ENCODE measurements at regions of chr16 and their contacts with region 1.

Region 1: DNA sequence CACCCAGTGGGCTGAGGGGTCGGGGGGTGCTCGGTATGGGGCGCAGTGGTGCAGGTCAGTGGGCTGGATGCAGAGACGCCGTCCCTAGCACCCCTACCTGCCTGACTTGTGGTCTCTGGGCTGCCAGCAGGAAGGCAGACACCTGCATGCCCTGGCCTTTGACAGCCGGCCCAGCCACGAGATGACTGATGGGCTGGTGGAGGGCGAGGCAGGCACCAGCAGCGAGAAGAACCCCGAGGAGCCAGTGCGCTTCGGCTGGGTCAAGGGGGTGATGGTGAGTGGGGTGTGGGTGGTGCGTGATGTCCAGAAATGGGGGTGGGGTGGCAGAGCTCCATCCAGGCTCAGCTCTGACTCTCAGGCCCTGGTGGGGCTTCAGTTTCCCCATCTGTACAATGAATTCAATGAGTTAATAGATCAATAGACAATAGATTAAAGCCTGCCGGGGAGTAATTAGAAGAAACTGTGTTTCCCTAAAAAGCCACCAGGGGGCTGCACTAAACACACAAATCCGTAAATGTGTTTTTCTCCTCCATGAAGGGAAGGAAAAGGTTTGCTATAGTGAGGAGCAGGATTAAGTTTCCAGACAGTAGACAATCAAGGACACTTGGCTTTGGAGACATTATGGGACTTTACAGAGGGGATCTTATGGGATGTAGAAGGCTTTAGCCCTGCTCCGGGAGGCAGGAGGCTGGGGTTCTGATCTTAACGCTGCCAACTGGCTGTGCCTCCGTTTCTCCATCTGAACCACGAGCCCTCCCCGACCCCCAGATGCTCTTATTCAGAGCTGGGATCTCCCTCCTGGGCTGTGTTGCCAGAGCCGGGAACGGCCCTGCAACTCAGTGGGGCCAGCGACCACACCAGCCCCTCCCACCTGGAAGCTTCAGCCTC is 2.2 kb downstream of the SLC12A3 start:
- DNase-seq: peak; percentile 63 to 66 (median 65)
- ATAC-seq: peak; percentile 77
- H3K4me3 ChIP-seq: no peak overlapping the region
- H3K27ac ChIP-seq: peak overlapping the region in 1 of 4 donors; percentile 2
- H3K4me1 ChIP-seq: peaks cover 23% of the 10 kb centered on the region
- H3K27me3 ChIP-seq: no peaks in the 10 kb centered on the region
- CTCF ChIP-seq: peak; percentile 66 to 93 (median 85)
- POLR2A ChIP-seq: no peak

Region 2: DNA sequence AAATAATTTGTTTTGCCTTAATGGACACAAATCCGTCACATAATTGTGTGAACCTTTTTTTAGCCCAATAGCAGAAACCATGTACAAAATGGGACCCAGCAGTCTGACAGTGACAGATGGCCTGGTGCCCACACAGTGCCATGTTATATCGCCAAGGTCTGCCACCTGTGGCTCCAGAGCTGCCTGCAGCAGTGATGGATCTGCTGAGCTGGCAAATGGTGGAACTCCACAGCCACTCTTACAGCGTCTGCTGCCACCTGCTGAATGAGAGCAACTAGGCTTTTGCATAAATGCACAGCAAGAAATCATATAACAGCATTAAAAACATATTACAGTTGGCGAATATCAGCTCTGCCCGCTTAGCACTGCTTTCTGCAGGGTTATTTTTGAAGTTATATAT is 77.8 kb before region 1 on chr16:
- intact Hi-C with region 1: no loop called
- DNase-seq: peak; percentile 47 to 88 (median 78)
- ATAC-seq: peak; percentile 70
- H3K4me3 ChIP-seq: no peak overlapping the region
- H3K27ac ChIP-seq: no peak overlapping the region
- H3K4me1 ChIP-seq: no peaks in the 10 kb centered on the region
- H3K27me3 ChIP-seq: no peaks in the 10 kb centered on the region
- CTCF ChIP-seq: peak in 5 of 7 experiments; percentile 44 to 90 (median 66)
- POLR2A ChIP-seq: no peak

Region 3: DNA sequence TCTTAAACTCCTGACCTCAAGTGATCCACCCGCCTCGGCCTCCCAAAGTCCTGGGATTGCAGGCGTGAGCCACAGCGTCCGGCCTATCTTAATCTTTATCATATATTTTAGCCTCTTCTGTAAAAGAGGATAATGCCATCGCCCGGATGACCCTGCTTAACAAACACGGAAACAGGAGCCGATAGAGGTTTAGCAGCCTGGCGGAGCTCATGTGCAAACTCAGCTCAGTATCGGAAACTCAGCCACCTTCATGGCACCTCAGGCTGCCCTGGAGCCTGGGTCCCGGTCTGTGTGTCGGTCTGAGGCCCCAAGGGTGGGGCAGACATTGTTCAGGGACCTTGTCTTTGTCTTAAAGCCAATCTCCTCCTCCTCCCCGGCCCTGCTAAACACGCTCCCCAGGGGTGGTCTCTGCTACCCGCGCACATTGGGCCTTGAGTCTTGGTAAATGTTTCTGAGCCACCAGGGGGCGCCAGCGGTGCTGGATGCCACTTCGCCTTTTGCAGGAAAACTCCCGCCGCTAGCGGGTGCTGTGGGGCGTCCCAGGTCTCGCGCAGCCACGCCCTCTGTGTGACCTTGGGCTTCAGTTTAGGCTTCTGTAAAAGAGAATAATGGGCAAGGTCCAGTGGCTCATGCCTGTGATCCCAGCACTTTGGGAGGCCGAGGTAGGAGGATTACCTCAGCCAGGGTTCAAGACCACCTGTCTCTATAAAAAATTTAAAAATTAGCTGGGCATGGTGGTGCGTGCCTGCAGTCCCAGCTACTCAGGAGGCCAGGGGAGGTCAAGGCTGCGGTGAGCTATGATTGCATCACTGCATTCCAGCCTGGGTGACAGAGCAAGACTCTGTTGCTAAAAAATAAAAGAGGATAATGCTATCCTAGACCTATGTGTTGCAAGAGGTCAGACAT is 97.3 kb after region 1 on chr16:
- intact Hi-C with region 1: loop called (anchors 5 kb)
- DNase-seq: peak; percentile 76 to 91 (median 90)
- ATAC-seq: peak; percentile 75
- H3K4me3 ChIP-seq: no peak overlapping the region
- H3K27ac ChIP-seq: no peak overlapping the region
- H3K4me1 ChIP-seq: peaks cover 8% of the 10 kb centered on the region
- H3K27me3 ChIP-seq: no peaks in the 10 kb centered on the region
- CTCF ChIP-seq: peak; percentile 58 to 95 (median 87)
- POLR2A ChIP-seq: no peak

Region 4: DNA sequence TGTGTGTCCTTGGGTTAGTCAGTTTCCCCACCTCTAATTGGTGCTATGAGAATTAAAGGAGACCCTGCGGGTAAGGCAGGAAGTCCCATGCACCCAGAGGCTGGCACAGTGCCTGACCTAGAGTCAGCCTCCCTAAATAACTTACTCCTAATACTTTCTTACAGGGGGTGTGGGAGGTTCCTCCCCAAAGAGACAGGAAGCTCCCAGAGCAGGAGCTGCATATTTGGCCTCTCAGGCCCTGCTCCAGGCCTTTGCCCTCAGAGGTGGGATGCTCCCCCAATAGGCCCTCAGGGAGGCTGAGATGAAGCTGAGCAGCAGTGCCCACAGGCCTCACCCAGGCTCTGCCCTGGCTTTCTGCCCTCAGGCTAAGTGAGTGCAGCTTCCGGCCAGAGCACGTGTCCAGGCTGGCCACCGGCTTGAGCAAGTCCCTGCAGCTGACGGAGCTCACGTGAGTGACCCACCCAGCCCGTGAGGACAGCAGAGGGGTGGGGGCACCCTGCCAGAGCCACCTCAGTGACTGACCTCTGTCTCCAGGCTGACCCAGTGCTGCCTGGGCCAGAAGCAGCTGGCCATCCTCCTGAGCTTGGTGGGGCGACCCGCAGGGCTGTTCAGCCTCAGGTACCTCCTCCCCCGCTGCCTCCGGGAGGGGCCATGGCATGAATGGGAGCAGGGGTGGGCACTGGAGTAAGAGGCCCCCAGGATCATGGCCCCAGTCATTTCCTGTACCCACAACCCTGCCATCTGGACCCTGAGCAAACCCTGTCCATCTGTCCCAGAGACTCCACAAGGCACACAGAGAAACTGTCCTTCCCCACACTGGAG is 194.1 kb after region 1 on chr16:
- intact Hi-C with region 1: no loop called
- DNase-seq: peak in 3 of 4 donors; percentile 46 to 61 (median 52)
- ATAC-seq: peak; percentile 42
- H3K4me3 ChIP-seq: no peak overlapping the region
- H3K27ac ChIP-seq: peak overlapping the region in 2 of 4 donors; percentile 20 to 36
- H3K4me1 ChIP-seq: peaks cover 6% of the 10 kb centered on the region
- H3K27me3 ChIP-seq: no peaks in the 10 kb centered on the region
- CTCF ChIP-seq: no peak
- POLR2A ChIP-seq: no peak

Region 5: GRCh38 chr16:57127037-57127763 is 260.0 kb after region 1 on chr16:
- intact Hi-C with region 1: no loop called
- DNase-seq: no peak
- ATAC-seq: no peak
- H3K4me3 ChIP-seq: no peak overlapping the region
- H3K27ac ChIP-seq: no peak overlapping the region
- H3K4me1 ChIP-seq: no peaks in the 10 kb centered on the region
- H3K27me3 ChIP-seq: no peaks in the 10 kb centered on the region
- CTCF ChIP-seq: no peak
- POLR2A ChIP-seq: no peak

Region 6: DNA sequence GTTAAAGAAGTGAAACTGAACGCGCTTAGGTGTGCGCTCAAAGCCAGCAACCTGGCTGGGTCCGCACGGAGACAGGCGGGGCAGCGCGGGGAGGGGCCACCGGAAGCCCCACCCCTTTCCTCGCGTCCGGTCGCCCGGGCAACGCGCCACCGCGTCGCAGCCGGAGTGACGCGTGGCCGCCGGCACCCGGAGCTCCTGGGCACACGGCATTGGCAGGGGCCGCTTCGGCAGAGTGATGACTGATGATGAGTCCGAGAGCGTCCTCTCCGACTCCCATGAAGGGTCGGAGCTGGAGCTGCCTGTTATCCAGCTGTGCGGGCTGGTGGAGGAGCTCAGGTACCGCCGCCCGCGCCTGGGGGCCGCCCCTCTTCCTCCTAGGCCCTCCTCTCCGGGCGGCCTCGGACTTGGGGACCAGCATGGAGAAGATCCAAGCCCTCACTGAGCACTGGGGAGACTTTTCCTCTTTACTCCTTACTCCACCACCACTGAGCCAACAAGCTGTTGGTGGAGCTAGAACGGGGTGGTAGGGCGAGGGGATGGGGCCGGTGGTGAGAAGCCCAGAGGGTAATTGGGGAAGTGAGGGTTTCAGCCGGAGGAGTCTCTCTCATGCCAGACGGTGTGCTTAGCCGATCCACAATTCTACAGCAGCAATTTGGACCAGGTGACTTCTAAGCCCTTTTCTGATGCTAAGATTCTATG is 1382.7 kb after region 1 on chr16:
- intact Hi-C with region 1: no loop called
- DNase-seq: peak; percentile 84 to 91 (median 88)
- ATAC-seq: peak; percentile 97
- H3K4me3 ChIP-seq: peak overlapping the region in 1 of 2 donors; percentile 42
- H3K27ac ChIP-seq: peak overlapping the region in 3 of 4 donors; percentile 51 to 70 (median 62)
- H3K4me1 ChIP-seq: peaks cover 16% of the 10 kb centered on the region
- H3K27me3 ChIP-seq: no peaks in the 10 kb centered on the region
- CTCF ChIP-seq: no peak
- POLR2A ChIP-seq: peak in 2 of 3 donors; percentile 61

Measured in body of pancreas (tissue), 4 donors.